ENCODE measurements at regions of chr18 and their contacts with region 1.

Region 1: DNA sequence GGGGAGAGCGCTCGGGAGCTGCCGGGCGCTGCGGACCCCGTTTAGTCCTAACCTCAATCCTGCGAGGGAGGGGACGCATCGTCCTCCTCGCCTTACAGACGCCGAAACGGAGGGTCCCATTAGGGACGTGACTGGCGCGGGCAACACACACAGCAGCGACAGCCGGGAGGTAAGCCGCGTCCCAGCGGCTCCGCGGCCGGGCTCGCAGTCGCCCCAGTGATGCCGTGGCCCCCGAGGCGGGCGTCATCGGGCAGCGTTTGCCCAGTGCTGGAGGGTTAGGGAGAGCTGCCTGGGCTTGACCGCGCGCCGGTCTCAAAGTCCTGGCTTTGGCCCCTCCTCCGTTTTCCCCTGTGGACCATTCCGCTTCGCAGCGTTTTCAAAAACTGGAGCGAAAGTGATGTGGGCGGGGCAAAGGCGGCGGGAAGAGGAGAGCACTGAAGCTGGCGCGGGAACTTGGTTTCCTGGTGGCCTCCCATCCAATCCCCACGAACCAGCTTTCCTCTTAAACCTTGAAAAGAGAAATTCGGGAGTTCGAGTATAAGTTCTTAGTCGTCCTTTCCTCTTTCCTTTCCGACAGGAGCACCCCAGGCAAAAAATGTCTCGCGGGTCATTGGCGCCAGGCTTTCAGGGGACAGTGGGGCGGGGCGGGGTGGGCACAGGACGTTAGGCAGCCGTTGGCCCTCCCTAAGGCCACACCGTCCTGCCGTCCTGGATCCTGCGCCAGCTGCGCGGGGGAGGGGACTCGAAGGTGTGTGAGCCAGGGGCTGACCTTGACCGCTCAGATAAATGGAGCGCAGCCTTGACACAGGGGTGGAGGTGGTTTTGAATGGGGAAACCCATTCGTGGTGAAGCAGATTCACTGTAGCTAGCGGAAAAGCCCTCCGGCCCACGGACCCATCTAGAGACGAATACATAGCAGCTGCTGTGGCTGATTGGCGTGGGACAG is 821 bp downstream of the TYMS start:
- DNase-seq: peak; percentile 90
- ATAC-seq: peak; percentile 80
- H3K4me3 Mint-ChIP-seq: peak overlapping the region; percentile 96
- H3K27ac Mint-ChIP-seq: peak overlapping the region; percentile 89
- H3K4me1 Mint-ChIP-seq: peaks cover 46% of the 10 kb centered on the region
- H3K27me3 Mint-ChIP-seq: no peaks in the 10 kb centered on the region

Region 2: GRCh38 chr18:623761-624620 is 34.3 kb before region 1 on chr18:
- CTCF ChIA-PET with region 1: interaction called, 12 read pairs
- DNase-seq: peak; percentile 75
- ATAC-seq: peak; percentile 83
- H3K4me3 Mint-ChIP-seq: no peak overlapping the region
- H3K27ac Mint-ChIP-seq: no peak overlapping the region
- H3K4me1 Mint-ChIP-seq: no peaks in the 10 kb centered on the region
- H3K27me3 Mint-ChIP-seq: peaks cover 36% of the 10 kb centered on the region

Region 3: DNA sequence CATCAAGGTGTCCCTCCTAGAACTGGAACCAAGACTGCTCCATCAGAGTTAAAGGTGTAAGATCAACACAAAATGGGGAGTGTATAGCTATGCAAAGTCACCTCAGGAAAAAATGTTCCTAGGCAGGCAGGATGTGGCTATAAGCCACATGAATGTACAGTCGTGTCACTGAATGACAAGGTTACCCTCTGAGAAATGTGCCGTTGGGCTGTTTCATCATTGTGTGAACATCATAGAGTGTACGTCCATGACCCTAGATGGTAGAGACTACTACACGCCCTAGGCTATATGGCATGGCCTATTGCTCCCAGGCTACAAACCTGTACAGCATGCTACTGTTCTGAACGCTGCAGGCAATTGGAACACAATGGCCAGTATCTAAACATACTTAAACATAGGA is 23.7 kb after region 1 on chr18:
- CTCF ChIA-PET with region 1: interaction called, 10 read pairs
- DNase-seq: peak; percentile 91
- ATAC-seq: peak; percentile 97
- H3K4me3 Mint-ChIP-seq: peak overlapping the region; percentile 19
- H3K27ac Mint-ChIP-seq: peak overlapping the region; percentile 90
- H3K4me1 Mint-ChIP-seq: peaks cover 35% of the 10 kb centered on the region
- H3K27me3 Mint-ChIP-seq: no peaks in the 10 kb centered on the region

Region 4: DNA sequence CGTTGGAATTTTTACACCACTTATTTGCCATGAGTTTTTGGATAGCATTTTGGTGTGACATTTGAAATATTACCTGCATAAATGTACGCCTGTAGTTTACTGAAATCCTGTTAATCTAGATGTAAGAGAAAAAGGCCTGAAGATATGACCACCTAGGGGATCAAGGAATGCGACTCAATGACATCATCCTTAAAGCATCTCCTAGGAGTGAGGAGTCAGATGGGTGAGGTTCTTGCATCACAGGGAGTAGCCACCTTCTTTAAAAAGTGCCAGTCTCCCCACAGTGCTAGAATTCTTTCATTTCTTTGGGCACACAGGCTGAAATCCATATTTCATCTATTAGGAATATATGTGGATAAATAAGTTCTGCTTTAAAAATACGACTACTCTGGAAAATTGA is 280.9 kb after region 1 on chr18:
- CTCF ChIA-PET with region 1: no interaction called
- DNase-seq: no peak
- ATAC-seq: no peak
- H3K4me3 Mint-ChIP-seq: no peak overlapping the region
- H3K27ac Mint-ChIP-seq: no peak overlapping the region
- H3K4me1 Mint-ChIP-seq: no peaks in the 10 kb centered on the region
- H3K27me3 Mint-ChIP-seq: peaks cover 3% of the 10 kb centered on the region